HepG2 (cell line): ENCODE measurements at regions of chr6 and their contacts with region 1.

Region 1: GRCh38 chr6:56911847-56912246 is 43.1 kb upstream of the BEND6 start:
- DNase-seq: no peak
- ATAC-seq: no peak
- H3K4me3 ChIP-seq: no peak overlapping the region
- H3K27ac ChIP-seq: no peak overlapping the region
- H3K4me1 ChIP-seq: no peaks in the 10 kb centered on the region
- H3K27me3 ChIP-seq: peaks cover 1 to 28% of the 10 kb centered on the region in 2 experiments; a peak in 3 of 5 replicates
- CTCF ChIP-seq: no peak
- EP300 ChIP-seq: no peak
- POLR2A ChIP-seq: no peak
- RAD21 ChIP-seq: no peak

Region 2: GRCh38 chr6:57021086-57021720 is 109.4 kb after region 1 on chr6:
- CTCF ChIA-PET with region 1: no interaction called
- POLR2A ChIA-PET with region 1: no interaction called
- in situ Hi-C with region 1: loop called (anchors 10 kb)
- intact Hi-C with region 1: loop called (anchors 2 kb)
- DNase-seq: peak; percentile 46
- ATAC-seq: peak; percentile 91
- H3K4me3 ChIP-seq: no peak overlapping the region
- H3K27ac ChIP-seq: no peak overlapping the region
- H3K4me1 ChIP-seq: no peaks in the 10 kb centered on the region
- H3K27me3 ChIP-seq: peaks cover 0 to 4% of the 10 kb centered on the region in 2 experiments; a peak in 1 of 5 replicates
- CTCF ChIP-seq: peak; percentile 65
- EP300 ChIP-seq: no peak
- POLR2A ChIP-seq: no peak
- RAD21 ChIP-seq: no peak